Heart right ventricle (tissue), 16 donors: ENCODE measurements at regions of chr5 and their contacts with region 1.

Region 1: GRCh38 chr5:156326718-156327259 is at the start of gene SGCD:
- DNase-seq: peak; percentile 67 to 71
- ATAC-seq: peak; percentile 79 to 93 (median 90)
- H3K4me3 ChIP-seq: peak within 1 kb of the TSS; percentile 29 to 66 (median 53)
- H3K27ac ChIP-seq: peak within 1 kb of the TSS; percentile 9 to 88 (median 80)
- H3K4me1 ChIP-seq: peaks cover 0 to 37% (median 17%) of the 10 kb centered on the region in 9 donors
- H3K27me3 ChIP-seq: no peaks in the 10 kb centered on the region
- CTCF ChIP-seq: peak in 1 of 9 donors; percentile 6
- total RNA-seq, gene SGCD: 74.4 to 153 (median 101) TPM

Region 2: GRCh38 chr5:155728146-155728856 is 598.5 kb before region 1 on chr5:
- intact Hi-C with region 1: loop called in 1 of 10 experiments (anchors 2 kb)
- DNase-seq: peak; percentile 47 to 68
- ATAC-seq: peak; percentile 17 to 86 (median 76)
- H3K4me3 ChIP-seq: peak overlapping the region; percentile 39 to 64 (median 56)
- H3K27ac ChIP-seq: peak overlapping the region; percentile 50 to 91 (median 83)
- H3K4me1 ChIP-seq: peaks cover 0 to 40% (median 5%) of the 10 kb centered on the region in 9 donors
- H3K27me3 ChIP-seq: peaks cover 0 to 71% (median 33%) of the 10 kb centered on the region in 7 donors
- CTCF ChIP-seq: peak in 4 of 9 donors; percentile 24 to 43 (median 37)

Region 3: DNA sequence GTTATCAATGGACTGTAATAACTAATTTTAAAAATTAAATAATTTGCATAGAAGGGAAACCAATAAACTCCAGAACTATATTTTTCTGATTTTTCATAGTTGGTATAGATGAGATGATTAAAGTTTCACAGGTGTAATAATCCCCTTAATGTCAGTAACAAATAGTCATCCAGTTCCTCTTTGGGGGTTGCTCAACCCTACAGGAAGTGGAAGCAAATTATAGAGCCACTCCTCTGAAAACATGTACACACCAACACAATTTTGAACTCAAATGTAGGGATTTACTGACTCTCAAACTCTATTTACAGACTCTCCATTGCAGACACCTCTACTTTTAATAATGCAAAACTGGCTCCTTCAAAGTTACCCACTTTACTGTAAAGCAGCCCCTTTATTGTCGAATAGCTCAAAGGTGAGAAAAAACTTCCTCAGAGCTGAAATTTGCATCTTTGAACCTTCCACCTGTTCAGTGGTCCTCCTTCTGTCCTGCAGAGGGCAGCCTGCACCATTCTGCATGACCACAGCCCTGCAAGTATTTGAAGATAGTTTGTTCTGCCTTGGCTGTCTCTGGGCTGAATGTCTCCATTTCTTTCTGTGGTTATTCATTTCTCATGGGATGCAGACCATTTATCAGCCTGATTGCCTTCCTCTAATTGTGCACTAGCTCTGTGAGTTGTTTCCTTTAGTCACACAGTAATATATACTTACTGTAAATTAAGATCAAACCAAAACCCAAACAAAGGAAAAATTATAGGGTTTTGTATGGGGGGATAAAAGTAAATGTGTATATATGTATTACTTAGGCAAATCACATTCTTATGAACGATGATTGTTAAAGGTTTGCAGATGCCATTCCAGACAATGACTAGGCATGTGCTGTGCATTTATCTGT is 383.0 kb before region 1 on chr5:
- intact Hi-C with region 1: loop called in 1 of 10 experiments (anchors 10 kb)
- DNase-seq: peak; percentile 27 to 31
- ATAC-seq: peak in 7 of 8 donors; percentile 65 to 89 (median 75)
- H3K4me3 ChIP-seq: no peak overlapping the region
- H3K27ac ChIP-seq: no peak overlapping the region
- H3K4me1 ChIP-seq: peaks cover 0 to 4% (median 0%) of the 10 kb centered on the region in 9 donors
- H3K27me3 ChIP-seq: no peaks in the 10 kb centered on the region
- CTCF ChIP-seq: peak; percentile 31 to 83 (median 72)

Region 4: GRCh38 chr5:156036640-156037039 is 290.1 kb before region 1 on chr5:
- intact Hi-C with region 1: loop called in 1 of 10 experiments (anchors 10 kb)
- DNase-seq: peak in 1 of 2 donors; percentile 15
- ATAC-seq: peak; percentile 53 to 95 (median 88)
- H3K4me3 ChIP-seq: no peak overlapping the region
- H3K27ac ChIP-seq: peak overlapping the region in 8 of 10 donors; percentile 11 to 84 (median 69)
- H3K4me1 ChIP-seq: peaks cover 0 to 30% (median 11%) of the 10 kb centered on the region in 9 donors
- H3K27me3 ChIP-seq: no peaks in the 10 kb centered on the region
- CTCF ChIP-seq: no peak

Region 5: GRCh38 chr5:156497804-156498208 is 171.0 kb after region 1 on chr5:
- intact Hi-C with region 1: no loop called
- DNase-seq: no peak
- ATAC-seq: peak; percentile 18 to 84 (median 68)
- H3K4me3 ChIP-seq: no peak overlapping the region
- H3K27ac ChIP-seq: peak overlapping the region in 7 of 10 donors; percentile 22 to 63 (median 51)
- H3K4me1 ChIP-seq: peaks cover 5 to 57% (median 28%) of the 10 kb centered on the region in 9 donors
- H3K27me3 ChIP-seq: no peaks in the 10 kb centered on the region
- CTCF ChIP-seq: no peak

Region 6: GRCh38 chr5:156584528-156585270 is 257.9 kb after region 1 on chr5:
- intact Hi-C with region 1: loop called in 1 of 10 experiments (anchors 5 kb)
- DNase-seq: no peak
- ATAC-seq: peak; percentile 21 to 77 (median 48)
- H3K4me3 ChIP-seq: no peak overlapping the region
- H3K27ac ChIP-seq: peak overlapping the region; percentile 11 to 86 (median 76)
- H3K4me1 ChIP-seq: peaks cover 4 to 57% (median 26%) of the 10 kb centered on the region in 9 donors
- H3K27me3 ChIP-seq: no peaks in the 10 kb centered on the region
- CTCF ChIP-seq: no peak